Heart left ventricle (tissue), 16 donors: ENCODE measurements at regions of chr16 and their contacts with region 1.

Region 1: GRCh38 chr16:15427648-15428239 is 6.6 kb upstream of the BMERB1 start:
- DNase-seq: peak; percentile 69 to 83 (median 76)
- ATAC-seq: peak; percentile 72 to 93 (median 90)
- H3K4me3 ChIP-seq: peak overlapping the region in 3 of 12 donors; percentile 8 to 27 (median 19)
- H3K27ac ChIP-seq: peak overlapping the region in 6 of 12 donors; percentile 30 to 70 (median 44)
- H3K4me1 ChIP-seq: peaks cover 0 to 6% (median 0%) of the 10 kb centered on the region in 12 donors
- H3K27me3 ChIP-seq: no peaks in the 10 kb centered on the region
- CTCF ChIP-seq: peak; percentile 40 to 81 (median 68)
- POLR2A ChIP-seq: no peak

Region 2: DNA sequence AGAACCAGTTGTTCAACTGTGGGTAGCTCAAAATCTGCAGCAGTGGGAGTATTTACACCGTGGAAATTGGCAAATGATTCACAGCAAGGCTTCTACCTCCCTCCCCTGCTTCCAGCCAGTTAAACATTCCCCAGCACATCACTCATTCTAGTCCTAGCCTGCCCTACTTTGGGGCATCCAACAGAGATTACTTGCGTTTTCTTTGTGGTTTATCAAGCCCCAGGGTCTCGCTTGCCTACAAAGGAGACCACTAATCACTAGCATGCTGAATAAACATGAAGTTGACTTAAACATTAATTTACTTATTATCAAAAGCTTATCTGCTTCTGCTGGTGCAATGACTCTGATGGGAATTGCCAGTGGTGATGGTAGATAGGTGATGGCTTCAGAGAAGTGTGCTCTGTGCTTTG is 120.7 kb after region 1 on chr16:
- intact Hi-C with region 1: loop called (anchors 2 to 10 kb)
- DNase-seq: no peak
- ATAC-seq: no peak
- H3K4me3 ChIP-seq: no peak overlapping the region
- H3K27ac ChIP-seq: no peak overlapping the region
- H3K4me1 ChIP-seq: peaks cover 0 to 12% (median 2%) of the 10 kb centered on the region in 12 donors
- H3K27me3 ChIP-seq: no peaks in the 10 kb centered on the region
- CTCF ChIP-seq: no peak
- POLR2A ChIP-seq: no peak

Region 3: GRCh38 chr16:15553313-15554088 is 125.8 kb after region 1 on chr16:
- intact Hi-C with region 1: loop called (anchors 2 to 10 kb)
- DNase-seq: no peak
- ATAC-seq: no peak
- H3K4me3 ChIP-seq: no peak overlapping the region
- H3K27ac ChIP-seq: no peak overlapping the region
- H3K4me1 ChIP-seq: peaks cover 0 to 12% (median 2%) of the 10 kb centered on the region in 12 donors
- H3K27me3 ChIP-seq: no peaks in the 10 kb centered on the region
- CTCF ChIP-seq: no peak
- POLR2A ChIP-seq: no peak

Region 4: GRCh38 chr16:15607700-15608396 is 180.1 kb after region 1 on chr16:
- intact Hi-C with region 1: loop called in 1 of 10 experiments (anchors 10 kb)
- DNase-seq: peak; percentile 47 to 91 (median 72)
- ATAC-seq: peak; percentile 95 to 97 (median 95)
- H3K4me3 ChIP-seq: no peak overlapping the region
- H3K27ac ChIP-seq: peak overlapping the region in 11 of 12 donors; percentile 32 to 82 (median 61)
- H3K4me1 ChIP-seq: peaks cover 0 to 18% (median 8%) of the 10 kb centered on the region in 12 donors
- H3K27me3 ChIP-seq: no peaks in the 10 kb centered on the region
- CTCF ChIP-seq: no peak
- POLR2A ChIP-seq: no peak

Region 5: DNA sequence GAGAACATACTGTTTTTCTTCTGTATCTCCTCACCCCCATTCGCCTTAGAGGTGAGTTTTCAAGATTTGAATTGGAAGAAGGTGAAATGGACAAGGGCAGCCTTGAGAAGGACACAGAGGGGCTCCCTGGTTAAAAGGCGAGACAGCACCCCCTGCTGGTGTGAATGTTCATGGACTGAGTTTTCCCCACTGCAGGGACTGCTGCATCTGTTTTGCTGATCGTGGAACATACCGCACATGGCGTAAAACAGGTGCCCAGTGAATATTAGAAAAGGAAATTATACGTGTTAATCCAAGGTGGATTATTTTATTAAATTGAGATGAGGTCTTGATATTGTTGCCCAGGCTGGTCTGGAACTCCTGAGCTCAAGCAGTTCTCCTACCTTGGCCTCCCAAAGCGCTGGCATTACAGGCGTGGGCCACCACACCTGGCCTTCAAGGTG is 276.8 kb after region 1 on chr16:
- intact Hi-C with region 1: loop called in 7 of 10 experiments (anchors 2 to 10 kb)
- DNase-seq: peak; percentile 71 to 81 (median 73)
- ATAC-seq: peak; percentile 50 to 90 (median 82)
- H3K4me3 ChIP-seq: no peak overlapping the region
- H3K27ac ChIP-seq: peak overlapping the region in 1 of 12 donors; percentile 38
- H3K4me1 ChIP-seq: peaks cover 0 to 4% (median 0%) of the 10 kb centered on the region in 12 donors
- H3K27me3 ChIP-seq: no peaks in the 10 kb centered on the region
- CTCF ChIP-seq: peak; percentile 68 to 86 (median 80)
- POLR2A ChIP-seq: no peak